ENCODE measurements at regions of chr6 and their contacts with region 1.

Region 1: DNA sequence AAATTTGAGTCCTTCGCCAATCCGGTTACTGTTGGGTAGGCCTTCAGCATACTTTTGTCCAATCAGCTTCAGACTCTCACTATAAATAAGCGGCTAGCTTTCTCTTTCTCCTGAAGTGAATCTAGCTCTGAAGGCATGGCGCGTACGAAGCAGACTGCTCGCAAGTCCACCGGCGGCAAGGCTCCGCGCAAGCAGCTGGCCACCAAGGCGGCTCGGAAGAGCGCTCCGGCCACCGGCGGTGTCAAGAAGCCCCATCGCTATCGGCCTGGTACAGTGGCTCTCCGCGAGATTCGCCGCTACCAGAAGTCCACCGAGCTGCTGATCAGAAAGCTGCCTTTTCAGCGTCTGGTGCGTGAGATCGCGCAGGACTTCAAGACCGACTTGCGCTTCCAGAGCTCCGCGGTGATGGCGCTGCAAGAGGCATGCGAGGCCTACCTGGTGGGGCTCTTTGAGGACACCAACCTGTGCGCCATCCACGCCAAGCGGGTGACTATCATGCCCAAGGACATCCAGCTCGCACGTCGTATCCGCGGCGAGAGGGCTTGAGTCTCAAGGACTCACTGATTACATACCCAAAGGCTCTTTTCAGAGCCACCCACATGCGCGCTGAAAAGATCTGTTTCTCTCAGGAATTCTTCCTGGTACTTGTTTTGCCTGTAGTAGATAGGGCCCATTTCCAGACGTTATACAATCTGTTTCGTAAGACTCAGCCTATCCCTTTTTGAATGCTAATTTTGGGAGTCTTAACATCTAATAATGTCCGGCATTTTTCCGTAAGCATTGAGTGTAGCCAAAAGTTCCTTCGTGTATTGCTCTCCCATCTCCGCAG is 102.0 kb downstream of the OR2B2 start:
- DNase-seq: peak; percentile 89
- H3K4me3 ChIP-seq: peak overlapping the region; percentile 48 to 67 (median 53)
- H3K27ac ChIP-seq: peak overlapping the region; percentile 90 to 94 (median 92)
- H3K4me1 ChIP-seq: peaks cover 0 to 49% (median 22%) of the 10 kb centered on the region in 4 donors
- H3K27me3 ChIP-seq: peaks cover 5% of the 10 kb centered on the region
- CTCF ChIP-seq: no peak
- EP300 ChIP-seq: no peak
- POLR2A ChIP-seq: peak; percentile 100

Region 2: GRCh38 chr6:26025894-26026832 is 1784.0 kb before region 1 on chr6:
- in situ Hi-C with region 1: loop called in 3 of 4 experiments (anchors 25 kb)
- intact Hi-C with region 1: no loop called
- DNase-seq: peak; percentile 98
- H3K4me3 ChIP-seq: peak overlapping the region; percentile 48 to 66 (median 55)
- H3K27ac ChIP-seq: peak overlapping the region; percentile 90 to 98 (median 96)
- H3K4me1 ChIP-seq: peaks cover 0 to 25% (median 18%) of the 10 kb centered on the region in 4 donors
- H3K27me3 ChIP-seq: no peaks in the 10 kb centered on the region
- CTCF ChIP-seq: peak; percentile 73 to 97 (median 88)
- EP300 ChIP-seq: no peak
- POLR2A ChIP-seq: no peak

Region 3: GRCh38 chr6:28252009-28252975 is 442.1 kb after region 1 on chr6 and contains the start of gene ZKSCAN4:
- in situ Hi-C with region 1: no loop called
- intact Hi-C with region 1: no loop called
- DNase-seq: peak; percentile 87
- H3K4me3 ChIP-seq: peak within 1 kb of the TSS; percentile 42 to 97 (median 83)
- H3K27ac ChIP-seq: peak within 1 kb of the TSS; percentile 60 to 80 (median 68)
- H3K4me1 ChIP-seq: peaks cover 11 to 17% (median 15%) of the 10 kb centered on the region in 4 donors
- H3K27me3 ChIP-seq: peaks cover 19% of the 10 kb centered on the region
- CTCF ChIP-seq: no peak
- EP300 ChIP-seq: no peak
- POLR2A ChIP-seq: no peak
- total RNA-seq, gene ZKSCAN4: 0.60 to 9.0 (median 4.9) TPM